ENCODE measurements at regions of chr7 and their contacts with region 1.

Region 1: DNA sequence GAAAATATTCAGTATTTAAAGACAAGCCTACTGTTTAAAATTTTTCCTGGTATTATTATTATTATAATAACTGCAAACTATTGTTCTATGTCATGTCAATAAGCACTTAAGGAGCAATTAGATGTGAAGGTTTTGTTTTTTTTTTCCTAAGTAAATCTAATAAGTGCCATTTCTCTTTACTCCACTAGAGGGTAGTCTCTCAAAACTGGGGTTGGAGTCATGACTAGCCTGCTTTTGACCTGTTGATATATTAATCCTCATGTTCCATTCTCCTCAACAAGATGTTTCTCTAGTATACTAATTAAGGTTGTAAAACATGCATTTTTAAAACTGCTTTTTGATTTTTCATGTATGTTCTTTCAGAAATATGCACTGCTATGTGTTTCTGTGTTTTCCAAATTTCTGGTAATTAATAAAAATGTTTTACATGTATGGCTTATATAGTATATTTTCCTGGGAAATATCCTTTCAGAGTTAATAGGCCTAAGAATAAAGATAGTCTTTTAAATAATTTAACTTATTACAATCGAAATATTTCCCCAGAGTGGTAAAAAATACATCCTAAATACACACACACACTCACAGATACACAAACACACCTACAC is 1.0 kb upstream of the LRRN3 start:
- DNase-seq: peak; percentile 66 to 72 (median 69)
- ATAC-seq: peak; percentile 83
- H3K4me3 ChIP-seq: no peak overlapping the region
- H3K27ac ChIP-seq: no peak overlapping the region
- H3K4me1 ChIP-seq: no peaks in the 10 kb centered on the region; a peak in 1 of 5 replicates
- H3K27me3 ChIP-seq: no peaks in the 10 kb centered on the region
- CTCF ChIP-seq: peak; percentile 54 to 80 (median 62)
- EP300 ChIP-seq: no peak
- POLR2A ChIP-seq: no peak
- RAD21 ChIP-seq: peak; percentile 67 to 77

Region 2: DNA sequence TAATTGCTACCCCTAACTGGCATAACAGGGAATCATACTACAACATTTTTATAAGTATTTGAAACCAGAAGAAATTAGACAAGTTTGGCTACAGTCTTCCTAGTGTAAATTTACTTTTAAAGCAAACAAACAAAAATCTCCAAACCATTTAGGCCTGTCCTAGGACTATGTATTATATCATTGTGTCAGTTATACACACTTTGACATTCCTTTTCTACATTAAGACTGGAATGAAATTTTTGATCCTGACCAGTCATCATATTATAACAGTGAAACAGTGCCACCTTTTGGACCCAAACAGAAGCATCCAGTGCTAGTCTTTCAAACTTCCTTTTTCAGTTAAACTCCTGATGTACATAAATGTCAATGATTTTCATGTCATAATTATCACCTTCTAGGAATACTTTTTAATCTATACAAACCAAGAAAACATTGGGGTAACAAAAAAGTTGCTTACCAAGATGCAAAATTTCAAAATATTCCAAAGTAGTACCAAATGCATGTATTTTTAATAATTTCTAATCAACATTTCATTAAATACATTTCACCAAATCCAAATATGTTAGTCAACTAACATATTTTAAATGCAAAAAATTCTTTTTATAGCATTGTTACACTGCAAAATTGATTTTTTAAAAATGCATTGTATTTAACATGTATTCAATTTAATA is 396.7 kb after region 1 on chr7:
- CTCF ChIA-PET with region 1: interaction called, 11 read pairs
- POLR2A ChIA-PET with region 1: no interaction called
- in situ Hi-C with region 1: no loop called
- intact Hi-C with region 1: loop called (anchors 1 kb)
- DNase-seq: peak; percentile 40 to 87 (median 60)
- ATAC-seq: peak; percentile 90
- H3K4me3 ChIP-seq: no peak overlapping the region
- H3K27ac ChIP-seq: no peak overlapping the region; the same call in 2 of the 3 replicates
- H3K4me1 ChIP-seq: no peaks in the 10 kb centered on the region
- H3K27me3 ChIP-seq: no peaks in the 10 kb centered on the region
- CTCF ChIP-seq: peak; percentile 73 to 96 (median 81)
- EP300 ChIP-seq: peak; percentile 44; the same call in 1 of the 2 replicates
- POLR2A ChIP-seq: no peak
- RAD21 ChIP-seq: peak; percentile 97 to 98

Region 3: DNA sequence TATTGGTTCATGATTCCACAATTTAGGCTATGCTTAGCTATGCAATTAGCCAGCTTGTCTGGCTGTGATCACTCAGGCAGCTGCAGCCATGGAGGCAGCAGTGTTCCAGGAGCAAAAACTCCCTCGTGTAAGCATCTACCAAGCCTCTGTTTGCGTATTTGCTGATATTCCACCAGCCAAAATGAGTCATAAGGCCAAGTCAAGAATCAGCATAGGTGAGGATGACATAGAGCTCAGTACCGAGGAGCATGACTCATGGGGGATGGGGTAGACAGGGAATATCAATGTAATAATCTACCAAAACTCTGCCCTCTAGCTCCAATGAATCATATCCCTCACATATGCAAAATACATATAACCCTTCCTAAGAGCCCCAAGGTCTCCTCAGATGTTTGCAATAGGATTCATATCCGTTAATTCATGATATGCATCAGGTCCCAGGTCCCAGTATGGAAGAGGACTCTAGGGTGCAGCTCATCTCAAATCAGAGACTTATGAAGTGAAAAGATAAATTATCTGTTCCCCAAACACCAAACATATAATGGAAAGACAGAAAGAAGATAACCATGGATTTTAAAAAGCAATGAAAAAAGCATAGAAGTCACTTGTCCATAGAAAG is 409.2 kb after region 1 on chr7:
- CTCF ChIA-PET with region 1: no interaction called
- POLR2A ChIA-PET with region 1: no interaction called
- in situ Hi-C with region 1: loop called (anchors 5 kb)
- intact Hi-C with region 1: no loop called
- DNase-seq: peak; percentile 35 to 55 (median 46)
- ATAC-seq: peak; percentile 79
- H3K4me3 ChIP-seq: no peak overlapping the region
- H3K27ac ChIP-seq: no peak overlapping the region
- H3K4me1 ChIP-seq: no peaks in the 10 kb centered on the region
- H3K27me3 ChIP-seq: no peaks in the 10 kb centered on the region
- CTCF ChIP-seq: no peak
- EP300 ChIP-seq: no peak
- POLR2A ChIP-seq: no peak
- RAD21 ChIP-seq: no peak

Region 4: DNA sequence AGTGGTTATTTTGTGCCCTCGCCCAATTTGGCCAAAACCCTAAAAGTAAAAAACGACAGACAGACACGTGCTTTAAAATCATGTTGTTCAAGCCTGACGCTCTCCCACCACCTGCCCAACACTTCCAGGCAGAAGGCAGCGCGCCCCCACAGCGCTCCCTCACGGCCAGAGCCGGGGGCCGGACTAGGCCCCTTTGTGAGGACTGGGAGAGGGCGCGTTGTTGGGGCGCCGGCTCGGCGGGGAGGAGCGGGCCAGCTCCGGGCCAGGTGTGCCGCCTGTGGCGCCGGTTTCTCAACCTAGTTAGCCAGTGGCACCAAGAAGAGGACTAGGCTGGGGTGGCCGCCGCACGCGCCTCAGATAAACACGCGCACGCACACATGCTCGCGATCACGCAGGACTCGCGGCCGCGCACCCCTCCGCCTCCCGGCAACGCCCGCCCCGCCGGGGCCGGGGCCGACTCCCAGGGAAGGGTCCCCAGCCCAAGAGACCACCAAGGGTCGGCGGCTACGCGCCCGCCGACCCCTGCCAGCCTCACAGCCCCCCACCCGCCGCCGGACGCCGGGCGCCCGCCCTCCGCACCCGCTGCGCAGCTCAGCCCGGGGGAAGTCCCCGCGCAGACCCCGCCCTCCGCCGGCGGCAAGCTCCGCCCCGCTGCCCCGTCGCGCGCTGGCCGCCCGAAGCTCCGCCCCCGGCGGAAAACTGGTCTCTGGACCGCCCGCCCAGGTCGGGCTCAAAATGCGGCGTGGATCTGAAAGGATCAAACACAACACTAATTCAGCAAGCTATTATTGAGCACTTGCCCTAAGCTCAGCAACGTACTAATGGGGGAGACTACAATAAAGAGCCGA is 472.2 kb after region 1 on chr7 and contains the start of gene IMMP2L:
- CTCF ChIA-PET with region 1: interaction called, 3 read pairs
- POLR2A ChIA-PET with region 1: no interaction called
- in situ Hi-C with region 1: no loop called
- intact Hi-C with region 1: loop called (anchors 5 kb)
- DNase-seq: peak; percentile 98 to 100 (median 100)
- ATAC-seq: peak; percentile 96
- H3K4me3 ChIP-seq: peak within 1 kb of the TSS; percentile 67
- H3K27ac ChIP-seq: peak within 1 kb of the TSS; percentile 85
- H3K4me1 ChIP-seq: peaks cover 6 to 19% of the 10 kb centered on the region in 2 experiments; a peak in 4 of 5 replicates
- H3K27me3 ChIP-seq: no peaks in the 10 kb centered on the region; a peak in 1 of 5 replicates
- CTCF ChIP-seq: peak; percentile 81 to 87 (median 84)
- EP300 ChIP-seq: peak; percentile 62
- POLR2A ChIP-seq: peak; percentile 84
- RAD21 ChIP-seq: peak; percentile 79 to 80
- polyA plus RNA-seq, gene IMMP2L: 112 to 116 TPM

Measured in K562 (cell line).